ENCODE measurements at regions of chr17 and their contacts with region 1.

Region 1: DNA sequence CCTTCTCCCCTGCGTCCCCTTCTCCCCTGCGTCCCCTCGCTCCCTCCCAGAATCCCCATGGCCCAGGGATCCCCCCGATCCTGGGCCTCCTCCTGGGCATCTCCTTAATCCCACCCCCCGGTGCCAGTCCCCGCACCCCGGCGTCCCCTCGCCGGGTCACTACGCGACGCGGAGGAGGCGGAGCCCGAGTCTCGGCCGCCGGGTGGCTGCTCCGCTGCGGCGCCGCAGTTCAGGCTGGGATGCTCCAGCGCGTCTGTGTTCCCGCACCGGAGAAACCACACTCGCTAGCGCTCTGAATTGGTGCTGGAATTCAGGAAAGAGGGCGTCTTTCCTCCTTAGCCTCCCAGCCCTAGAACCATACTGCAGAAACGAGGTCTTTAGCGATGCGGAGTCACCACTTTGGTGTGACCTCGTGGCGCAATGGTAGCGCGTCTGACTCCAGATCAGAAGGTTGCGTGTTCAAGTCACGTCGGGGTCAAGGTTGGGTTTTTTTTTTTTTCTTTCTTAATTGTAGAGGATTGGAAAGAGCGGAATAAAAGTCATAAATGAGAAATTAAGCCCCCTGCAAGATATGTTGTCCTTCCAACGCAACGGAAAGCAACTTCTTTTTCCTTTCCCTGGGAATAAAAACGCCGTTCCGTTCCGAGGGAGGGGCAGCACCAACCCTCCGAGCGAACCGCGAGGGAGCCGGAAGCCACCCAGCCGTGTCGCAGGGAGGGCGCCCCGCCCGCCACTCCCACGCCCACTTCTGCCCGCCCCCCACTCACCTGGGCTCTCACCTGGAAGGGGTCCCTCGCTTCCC is 25.7 kb upstream of the SLC47A1 start:
- DNase-seq: peak; percentile 82
- ATAC-seq: peak; percentile 89
- H3K4me3 ChIP-seq: peak overlapping the region; percentile 69 to 77 (median 75)
- H3K27ac ChIP-seq: no peak overlapping the region
- H3K4me1 ChIP-seq: peaks cover 36% of the 10 kb centered on the region
- H3K27me3 ChIP-seq: peaks cover 0 to 7% of the 10 kb centered on the region in 2 experiments; a peak in 2 of 5 replicates
- CTCF ChIP-seq: peak; percentile 44; the same call in 1 of the 2 replicates
- EP300 ChIP-seq: no peak
- POLR2A ChIP-seq: no peak
- RAD21 ChIP-seq: no peak

Region 2: GRCh38 chr17:19579867-19580565 is 72.0 kb after region 1 on chr17:
- CTCF ChIA-PET with region 1: no interaction called
- POLR2A ChIA-PET with region 1: no interaction called
- in situ Hi-C with region 1: no loop called
- intact Hi-C with region 1: no loop called
- DNase-seq: no peak
- ATAC-seq: no peak
- H3K4me3 ChIP-seq: no peak overlapping the region
- H3K27ac ChIP-seq: no peak overlapping the region
- H3K4me1 ChIP-seq: no peaks in the 10 kb centered on the region
- H3K27me3 ChIP-seq: no peaks in the 10 kb centered on the region
- CTCF ChIP-seq: no peak
- EP300 ChIP-seq: no peak
- POLR2A ChIP-seq: no peak
- RAD21 ChIP-seq: no peak

Region 3: GRCh38 chr17:19728079-19728495 is 220.1 kb after region 1 on chr17:
- CTCF ChIA-PET with region 1: no interaction called
- POLR2A ChIA-PET with region 1: no interaction called
- in situ Hi-C with region 1: loop called (anchors 25 kb)
- intact Hi-C with region 1: no loop called
- DNase-seq: peak; percentile 44
- ATAC-seq: peak; percentile 84
- H3K4me3 ChIP-seq: peak overlapping the region in 1 of 3 experiments; percentile 41; a peak in 1 of 6 replicates
- H3K27ac ChIP-seq: peak overlapping the region; percentile 46
- H3K4me1 ChIP-seq: peaks cover 55% of the 10 kb centered on the region
- H3K27me3 ChIP-seq: no peaks in the 10 kb centered on the region
- CTCF ChIP-seq: 0 out of 2 replicates have a peak, but pooled peaks have one; percentile 1
- EP300 ChIP-seq: 0 out of 4 replicates have a peak, but pooled peaks of 1 of the 2 experiments have one; percentile 17
- POLR2A ChIP-seq: no peak
- RAD21 ChIP-seq: no peak

Measured in HepG2 (cell line).